ENCODE measurements at regions of chr12 and their contacts with region 1.

Region 1: GRCh38 chr12:103548622-103549601 is 38.2 kb upstream of the STAB2 start:
- DNase-seq: no peak

Region 2: DNA sequence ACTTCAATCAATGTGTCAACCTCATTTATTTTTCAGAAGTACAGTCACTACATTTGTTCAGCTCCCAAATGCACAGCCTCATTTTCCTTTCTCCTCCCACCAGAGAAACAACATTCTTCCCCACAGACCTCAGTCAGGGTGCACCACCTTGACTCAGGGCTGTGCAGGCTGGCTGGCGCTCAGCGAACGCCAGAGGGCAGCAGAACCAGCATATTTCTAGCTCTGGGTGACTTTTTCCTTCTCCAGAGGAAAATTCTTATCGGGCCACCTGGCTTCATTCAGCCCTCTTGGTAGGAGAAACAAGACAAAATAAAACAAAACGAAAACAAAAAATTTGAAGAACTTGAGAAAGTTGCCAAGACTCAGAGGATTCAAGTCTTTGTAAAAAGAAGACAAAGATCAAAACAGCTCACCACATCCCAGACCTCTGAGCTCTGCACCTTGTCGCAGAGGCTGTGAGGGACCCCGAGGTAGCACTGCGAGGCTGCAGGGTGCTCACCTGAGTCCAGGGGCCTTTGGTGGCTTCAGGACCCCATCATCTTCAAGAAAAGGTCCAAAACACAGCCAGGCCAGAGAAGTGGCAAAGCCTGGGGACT is 665.6 kb before region 1 on chr12:
- intact Hi-C with region 1: loop called (anchors 2 kb)
- DNase-seq: no peak

Region 3: DNA sequence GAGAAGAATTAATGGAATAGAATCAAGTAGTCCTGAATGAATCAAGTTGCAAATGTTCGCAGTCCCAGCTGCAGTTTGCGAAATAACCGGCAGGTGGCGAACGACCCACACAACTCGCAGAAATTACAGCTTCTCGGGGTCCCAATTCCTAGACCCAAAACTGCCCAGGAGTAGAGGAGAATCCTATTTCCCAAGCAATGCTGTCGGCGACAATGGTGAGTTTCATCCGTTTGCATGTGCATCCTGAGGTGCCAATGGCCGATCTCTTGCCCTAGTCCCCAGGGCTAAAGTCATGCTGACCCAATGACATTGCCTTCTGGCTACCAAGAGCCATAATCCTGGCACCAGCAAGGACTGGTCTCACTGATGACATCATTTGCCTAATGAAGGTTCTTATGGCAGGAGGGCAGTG is 600.0 kb before region 1 on chr12:
- intact Hi-C with region 1: loop called (anchors 2 kb)
- DNase-seq: no peak